Psoas muscle (tissue), 8 donors: ENCODE measurements at regions of chr15 and their contacts with region 1.

Region 1: GRCh38 chr15:71743861-71744382 is 66.4 kb upstream of the NR2E3 start:
- DNase-seq: peak; percentile 42 to 61
- ATAC-seq: peak in 2 of 4 donors; percentile 53 to 69
- H3K4me3 ChIP-seq: no peak overlapping the region
- H3K27ac ChIP-seq: no peak overlapping the region
- H3K4me1 ChIP-seq: no peaks in the 10 kb centered on the region
- H3K27me3 ChIP-seq: no peaks in the 10 kb centered on the region
- CTCF ChIP-seq: peak; percentile 87

Region 2: DNA sequence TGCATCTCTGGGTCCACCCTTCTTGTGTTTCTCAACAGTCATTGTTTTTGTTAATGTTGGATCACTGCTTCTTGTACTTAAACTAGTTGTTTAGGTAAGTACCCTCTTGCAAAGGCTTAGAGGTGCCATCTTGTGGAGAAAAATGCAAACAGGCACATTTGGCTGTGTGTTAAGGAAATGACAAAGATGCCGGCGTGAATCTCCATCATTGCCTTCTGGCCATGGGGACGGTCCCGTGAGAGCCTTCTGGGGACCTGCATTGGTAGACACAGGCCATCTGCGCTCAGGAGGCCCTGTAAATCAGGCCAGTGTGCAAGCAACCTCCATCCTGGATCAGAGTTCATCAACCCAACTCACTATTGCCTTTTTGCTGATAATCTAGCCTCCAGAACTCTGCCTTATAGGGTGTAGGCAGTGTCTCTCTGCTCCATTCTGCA is 92.2 kb before region 1 on chr15:
- intact Hi-C with region 1: no loop called
- DNase-seq: no peak
- ATAC-seq: no peak
- H3K4me3 ChIP-seq: no peak overlapping the region
- H3K27ac ChIP-seq: no peak overlapping the region
- H3K4me1 ChIP-seq: no peaks in the 10 kb centered on the region
- H3K27me3 ChIP-seq: no peaks in the 10 kb centered on the region
- CTCF ChIP-seq: peak; percentile 30

Region 3: DNA sequence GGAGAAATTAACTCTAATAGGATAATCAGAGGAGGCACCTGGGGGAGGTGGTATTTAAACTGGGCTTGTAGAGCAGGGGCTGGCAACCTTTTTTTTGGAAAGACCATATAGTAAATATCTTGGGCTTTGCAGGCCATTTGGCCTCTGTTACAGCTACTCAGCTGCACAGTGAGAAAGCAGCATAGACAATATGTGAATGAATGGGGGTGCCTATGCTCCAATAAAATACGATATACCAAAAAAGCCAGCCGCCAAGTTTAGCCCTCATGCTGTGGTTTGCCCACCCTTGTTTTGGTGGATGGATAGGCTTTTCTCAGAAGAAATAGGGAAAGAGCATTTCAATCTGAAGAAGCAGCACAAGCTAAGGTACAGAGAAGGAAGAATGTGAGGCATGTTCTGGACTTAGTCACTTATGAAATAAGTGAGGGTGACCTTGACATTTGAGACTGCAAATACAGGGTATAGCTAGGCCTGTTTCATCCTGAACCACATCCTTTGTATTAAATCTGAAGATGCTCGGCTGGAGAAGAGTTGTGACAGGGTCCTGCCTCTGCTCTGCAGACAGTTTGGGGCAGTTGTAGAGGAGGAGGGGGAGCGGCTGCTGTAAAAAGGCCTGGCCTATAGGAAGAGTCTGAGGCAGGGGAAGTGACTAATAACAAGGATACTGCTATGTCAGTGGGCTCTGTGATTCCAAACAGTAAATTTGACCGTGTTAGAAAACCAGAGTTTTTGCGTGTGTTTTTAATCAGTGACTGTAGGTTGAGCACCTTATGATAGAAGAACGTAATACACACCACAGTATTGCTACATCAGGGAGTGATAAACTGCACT is 64.5 kb before region 1 on chr15:
- intact Hi-C with region 1: loop called in 1 of 2 experiments (anchors 10 kb)
- DNase-seq: no peak
- ATAC-seq: no peak
- H3K4me3 ChIP-seq: no peak overlapping the region
- H3K27ac ChIP-seq: no peak overlapping the region
- H3K4me1 ChIP-seq: peaks cover 14% of the 10 kb centered on the region
- H3K27me3 ChIP-seq: no peaks in the 10 kb centered on the region
- CTCF ChIP-seq: no peak

Region 4: GRCh38 chr15:71800835-71801745 is 57.2 kb after region 1 on chr15:
- intact Hi-C with region 1: loop called (anchors 2 to 5 kb)
- DNase-seq: no peak
- ATAC-seq: peak; percentile 68 to 82 (median 77)
- H3K4me3 ChIP-seq: no peak overlapping the region
- H3K27ac ChIP-seq: no peak overlapping the region
- H3K4me1 ChIP-seq: no peaks in the 10 kb centered on the region
- H3K27me3 ChIP-seq: no peaks in the 10 kb centered on the region
- CTCF ChIP-seq: peak; percentile 80